ENCODE measurements at regions of chr3 and their contacts with region 1.

Region 1: DNA sequence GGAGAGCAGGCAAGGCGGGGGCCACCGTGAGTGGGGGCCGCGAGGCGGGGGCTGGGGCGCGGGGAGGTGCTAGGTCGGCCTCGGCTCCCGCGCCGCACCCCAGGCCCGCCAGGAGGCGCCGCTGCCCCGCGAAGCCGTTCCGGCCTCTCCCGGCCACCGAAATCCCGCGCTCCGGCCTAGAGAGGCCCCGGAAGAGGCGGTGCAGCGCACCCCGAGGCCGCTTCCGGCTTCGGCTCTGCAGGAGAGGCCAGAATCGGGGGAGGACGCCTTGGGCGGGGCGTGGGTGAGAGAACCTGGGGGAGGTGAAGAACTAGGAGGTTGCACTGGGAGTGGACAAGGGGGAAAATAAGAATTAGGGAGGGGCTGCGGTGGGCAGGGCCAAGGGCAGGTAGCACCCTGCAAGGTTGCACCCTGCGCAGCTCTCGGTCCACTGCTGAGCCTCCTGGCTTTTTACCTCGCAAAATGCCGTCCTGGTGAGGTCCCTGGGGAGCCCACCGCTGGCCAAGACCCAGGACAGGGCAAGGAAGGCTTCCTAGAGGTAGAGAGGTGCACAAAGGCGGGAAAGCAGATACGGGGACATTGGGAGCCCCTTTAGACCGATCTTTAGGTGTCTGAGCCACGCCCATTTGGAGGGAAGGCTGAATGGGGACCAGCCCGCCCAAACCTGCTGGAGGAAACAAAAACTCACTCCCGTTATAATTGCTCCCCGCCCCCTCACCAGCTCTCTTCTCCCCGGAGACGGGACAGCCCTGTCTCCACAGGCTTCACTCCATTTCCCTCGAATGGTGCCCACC is 8.4 kb upstream of the GNAI2 start:
- DNase-seq: peak; percentile 94
- ATAC-seq: peak; percentile 87

Region 2: GRCh38 chr3:50008931-50009330 is 218.7 kb before region 1 on chr3:
- intact Hi-C with region 1: no loop called
- DNase-seq: no peak
- ATAC-seq: no peak

Region 3: DNA sequence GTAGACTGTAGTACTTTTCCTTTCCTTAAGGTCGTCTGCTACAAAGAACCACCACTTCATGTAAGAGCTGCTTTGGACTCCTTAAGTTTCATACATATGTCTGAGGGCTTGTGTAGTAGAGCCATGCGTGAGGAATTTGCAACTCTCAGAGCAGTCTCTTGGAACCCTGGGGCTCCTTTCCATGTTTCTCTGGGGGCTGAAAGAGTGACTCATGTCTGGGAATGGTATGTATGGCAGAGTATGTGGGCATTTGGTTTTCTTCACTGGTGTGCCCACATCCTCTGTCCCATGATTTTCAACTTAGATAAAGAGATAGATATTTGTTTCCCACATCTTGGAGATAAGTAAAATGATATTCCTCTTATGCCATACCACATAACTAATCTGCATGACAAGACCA is 159.5 kb before region 1 on chr3:
- intact Hi-C with region 1: no loop called
- DNase-seq: no peak
- ATAC-seq: no peak

Region 4: DNA sequence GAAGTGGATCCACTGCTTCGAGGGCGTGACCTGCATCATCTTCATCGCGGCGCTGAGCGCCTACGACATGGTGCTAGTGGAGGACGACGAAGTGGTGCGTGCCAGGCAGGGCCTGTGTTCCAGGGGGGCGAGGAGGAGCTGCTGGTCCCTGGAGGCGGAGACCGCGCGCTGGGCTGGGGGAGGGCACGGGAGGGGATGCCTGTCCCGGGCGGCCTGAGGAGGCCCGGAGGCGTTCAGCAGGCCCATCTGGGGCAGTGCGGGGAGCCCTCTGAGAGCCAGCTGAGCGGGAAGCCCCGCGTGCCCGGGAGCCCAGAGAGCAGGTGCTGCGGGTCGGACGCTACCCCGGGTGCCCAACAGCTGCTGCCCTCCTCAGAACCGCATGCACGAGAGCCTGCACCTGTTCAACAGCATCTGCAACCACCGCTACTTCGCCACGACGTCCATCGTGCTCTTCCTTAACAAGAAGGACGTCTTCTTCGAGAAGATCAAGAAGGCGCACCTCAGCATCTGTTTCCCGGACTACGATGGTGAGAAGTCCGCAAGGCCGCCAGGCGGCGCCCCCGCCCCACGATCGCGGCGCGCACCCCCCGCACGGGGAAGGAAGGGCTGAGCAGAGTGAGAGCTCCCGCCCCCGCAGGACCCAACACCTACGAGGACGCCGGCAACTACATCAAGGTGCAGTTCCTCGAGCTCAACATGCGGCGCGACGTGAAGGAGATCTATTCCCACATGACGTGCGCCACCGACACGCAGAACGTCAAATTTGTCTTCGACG is 33.3 kb before region 1 on chr3:
- intact Hi-C with region 1: loop called (anchors 2 kb)
- DNase-seq: peak; percentile 84
- ATAC-seq: peak; percentile 77

Region 5: DNA sequence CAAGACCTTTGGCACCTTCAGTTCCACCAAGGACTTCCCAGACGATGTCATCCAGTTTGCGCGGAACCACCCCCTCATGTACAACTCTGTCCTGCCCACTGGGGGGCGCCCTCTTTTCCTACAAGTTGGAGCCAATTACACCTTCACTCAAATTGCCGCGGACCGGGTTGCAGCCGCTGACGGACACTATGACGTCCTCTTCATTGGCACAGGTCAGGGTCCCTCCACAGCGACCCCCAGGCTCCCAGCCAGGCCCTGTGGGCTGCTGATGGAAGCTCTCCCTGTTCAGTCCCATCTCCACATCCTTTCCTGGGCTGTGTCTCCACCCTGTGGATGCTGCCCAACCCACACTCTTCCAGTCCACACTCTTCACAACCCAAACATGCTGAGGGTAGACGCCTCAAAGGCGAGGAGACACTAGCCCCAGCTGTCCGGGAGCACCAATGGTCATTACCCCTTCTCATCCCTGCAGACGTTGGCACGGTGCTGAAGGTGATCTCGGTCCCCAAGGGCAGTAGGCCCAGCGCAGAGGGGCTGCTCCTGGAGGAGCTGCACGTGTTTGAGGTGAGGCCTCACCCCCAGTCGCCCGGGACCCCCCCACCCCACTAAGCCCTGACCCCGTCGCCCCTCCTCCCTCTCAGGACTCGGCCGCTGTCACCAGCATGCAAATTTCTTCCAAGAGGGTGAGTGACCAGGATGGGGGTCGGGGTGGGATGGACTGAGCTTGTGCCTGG is 47.0 kb after region 1 on chr3:
- intact Hi-C with region 1: loop called (anchors 2 kb)
- DNase-seq: no peak
- ATAC-seq: peak; percentile 34

Measured in sciatic nerve (tissue), 2 donors.